ENCODE measurements at regions of chr22 and their contacts with region 1.

Region 1: DNA sequence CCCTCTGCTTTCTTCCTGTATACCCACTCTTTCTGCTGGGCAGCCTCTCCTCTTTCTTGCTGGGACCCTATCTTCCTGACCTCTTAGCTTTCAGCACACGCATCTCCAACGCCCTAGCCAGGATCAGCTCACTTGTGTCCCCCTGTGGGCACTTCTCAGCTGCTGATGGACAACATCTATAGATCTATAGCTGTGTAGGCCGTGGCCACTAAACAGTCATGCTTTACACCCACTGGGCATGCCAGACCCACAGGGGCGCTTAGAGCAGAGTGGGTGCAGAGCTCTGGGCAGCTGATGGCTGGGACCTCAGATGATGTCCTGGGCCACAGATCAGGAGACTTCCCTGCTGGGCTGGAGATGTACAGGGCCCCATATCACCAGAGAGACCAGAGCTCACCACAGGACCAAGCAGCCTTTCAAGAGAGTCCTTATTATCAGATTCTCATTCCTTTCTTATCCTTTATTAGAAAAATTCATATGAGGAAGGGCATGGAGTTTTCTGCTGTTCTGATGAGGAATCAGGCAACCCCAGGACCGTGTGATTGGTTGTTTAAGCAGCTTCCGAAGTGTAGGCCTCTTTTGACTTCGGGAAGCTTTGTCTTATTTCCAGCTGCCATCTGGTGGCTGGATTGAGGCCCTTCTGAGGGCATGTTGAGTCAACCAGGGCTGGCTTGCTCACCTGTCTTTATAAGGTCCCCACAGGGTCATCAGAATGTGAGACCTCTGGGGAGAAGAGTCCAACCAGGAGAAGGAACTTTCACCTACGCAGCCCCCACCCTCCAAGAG is 60.5 kb downstream of the OSBP2 start:
- DNase-seq: peak; percentile 21
- H3K4me3 ChIP-seq: no peak overlapping the region
- H3K27ac ChIP-seq: no peak overlapping the region
- H3K4me1 ChIP-seq: no peaks in the 10 kb centered on the region
- H3K27me3 ChIP-seq: no peaks in the 10 kb centered on the region
- CTCF ChIP-seq: peak; percentile 74

Region 2: GRCh38 chr22:30634471-30635233 is 120.5 kb before region 1 on chr22:
- intact Hi-C with region 1: loop called (anchors 5 kb)
- DNase-seq: peak; percentile 87
- H3K4me3 ChIP-seq: peak overlapping the region; percentile 79
- H3K27ac ChIP-seq: peak overlapping the region; percentile 94
- H3K4me1 ChIP-seq: peaks cover 40% of the 10 kb centered on the region
- H3K27me3 ChIP-seq: no peaks in the 10 kb centered on the region
- CTCF ChIP-seq: peak; percentile 95

Region 3: DNA sequence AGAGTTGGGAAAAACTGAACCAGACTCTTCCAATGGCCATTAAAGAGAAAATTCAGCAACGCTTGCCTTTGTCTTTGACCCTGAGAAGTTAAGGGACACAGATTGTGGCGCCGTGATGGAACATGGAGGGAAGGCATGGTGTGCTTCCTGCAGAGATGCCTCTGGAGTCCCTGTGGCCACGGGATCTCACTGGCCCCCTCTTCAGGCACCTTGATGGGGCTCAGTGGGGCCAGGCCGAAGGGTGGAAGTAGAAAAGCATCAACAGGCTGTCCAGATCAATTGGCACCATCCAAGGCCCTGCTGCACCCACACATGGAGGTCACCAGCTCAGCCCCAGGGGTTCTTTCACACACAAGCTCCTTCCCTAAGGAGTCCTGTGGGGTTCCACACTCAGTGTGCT is 170.5 kb after region 1 on chr22:
- intact Hi-C with region 1: no loop called
- DNase-seq: no peak
- H3K4me3 ChIP-seq: no peak overlapping the region
- H3K27ac ChIP-seq: no peak overlapping the region
- H3K4me1 ChIP-seq: peaks cover 23% of the 10 kb centered on the region
- H3K27me3 ChIP-seq: no peaks in the 10 kb centered on the region
- CTCF ChIP-seq: no peak

Region 4: DNA sequence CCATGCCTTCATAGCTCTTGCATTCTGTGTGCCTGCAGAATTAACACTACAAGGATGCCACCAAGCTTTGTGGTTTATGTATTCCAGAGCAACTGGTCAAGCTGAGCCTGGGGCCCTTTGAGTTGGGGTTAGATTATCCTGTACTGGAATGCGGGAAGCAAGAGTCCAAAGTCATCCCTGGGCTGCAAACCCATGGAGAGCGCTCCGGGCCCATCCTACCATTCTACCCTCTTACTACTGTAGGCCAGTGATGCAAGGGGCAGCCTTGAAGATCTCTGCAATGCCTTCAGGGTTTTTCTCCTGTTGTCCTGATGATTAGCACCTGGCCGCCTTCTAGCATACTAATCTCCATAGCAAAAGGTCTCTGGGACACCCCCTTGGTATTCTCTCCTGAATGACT is 265.2 kb after region 1 on chr22:
- intact Hi-C with region 1: no loop called
- DNase-seq: no peak
- H3K4me3 ChIP-seq: no peak overlapping the region
- H3K27ac ChIP-seq: no peak overlapping the region
- H3K4me1 ChIP-seq: no peaks in the 10 kb centered on the region
- H3K27me3 ChIP-seq: no peaks in the 10 kb centered on the region
- CTCF ChIP-seq: no peak

Measured in left ventricle myocardium inferior (tissue), 1 donor.